ENCODE measurements at regions of chr15 and their contacts with region 1.

Region 1: GRCh38 chr15:90071208-90071807 is 31.0 kb downstream of the IDH2 start:
- DNase-seq: peak; percentile 87
- ATAC-seq: peak; percentile 98
- H3K4me3 ChIP-seq: no peak overlapping the region
- H3K4me3 Mint-ChIP-seq: no peak overlapping the region
- H3K27ac ChIP-seq: no peak overlapping the region
- H3K27ac Mint-ChIP-seq: peak overlapping the region; percentile 28
- H3K4me1 ChIP-seq: peaks cover 0 to 7% of the 10 kb centered on the region in 2 donors
- H3K4me1 Mint-ChIP-seq: peaks cover 4% of the 10 kb centered on the region
- H3K27me3 ChIP-seq: no peaks in the 10 kb centered on the region
- H3K27me3 Mint-ChIP-seq: no peaks in the 10 kb centered on the region
- CTCF ChIP-seq: peak; percentile 83

Region 2: DNA sequence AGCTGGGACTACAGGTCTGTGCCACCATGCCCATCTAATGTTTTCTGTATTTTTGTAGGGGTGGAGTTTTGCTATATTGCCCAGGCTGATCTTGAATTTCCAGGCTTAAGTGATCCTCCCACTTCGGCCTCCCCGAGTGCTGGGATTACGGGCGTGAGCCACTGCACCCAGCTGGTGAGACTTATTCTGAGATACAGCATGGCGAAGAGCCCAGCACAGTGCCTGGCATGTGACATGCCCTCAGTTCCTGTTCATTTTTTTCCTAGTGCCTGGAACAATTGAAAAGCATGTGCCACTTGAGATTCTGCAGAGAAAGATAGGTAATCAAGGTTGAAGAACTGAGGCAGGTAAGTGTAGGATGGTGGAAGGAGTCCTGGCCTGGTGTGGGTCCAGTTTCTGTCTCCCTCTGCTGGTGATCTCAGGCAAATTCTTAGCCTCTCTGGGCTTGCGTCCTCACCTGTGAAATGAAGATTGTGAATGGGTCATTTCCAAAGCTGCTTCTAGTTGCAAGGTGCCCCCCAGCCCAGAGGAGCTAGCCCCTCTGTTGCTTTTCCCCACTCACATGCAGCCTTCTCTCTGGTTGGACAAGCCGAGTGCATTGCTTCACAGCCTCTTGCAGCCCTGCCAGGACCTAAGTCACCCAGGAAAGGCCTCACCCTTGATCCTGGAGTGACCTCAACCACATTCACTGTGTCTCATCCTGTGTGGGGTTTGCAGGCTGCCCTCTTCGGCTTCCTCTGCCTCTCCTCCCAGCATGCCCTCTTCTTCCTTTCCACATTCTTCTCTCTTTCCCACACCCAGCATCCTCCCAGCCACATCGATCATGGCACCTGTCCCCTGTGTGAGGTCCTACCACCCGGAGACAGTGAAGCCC is 570.7 kb before region 1 on chr15:
- CTCF ChIA-PET with region 1: no interaction called
- POLR2A ChIA-PET with region 1: no interaction called
- intact Hi-C with region 1: no loop called
- DNase-seq: no peak
- ATAC-seq: no peak
- H3K4me3 ChIP-seq: no peak overlapping the region
- H3K4me3 Mint-ChIP-seq: no peak overlapping the region
- H3K27ac ChIP-seq: no peak overlapping the region
- H3K27ac Mint-ChIP-seq: no peak overlapping the region
- H3K4me1 ChIP-seq: peaks cover 7 to 13% of the 10 kb centered on the region in 2 donors
- H3K4me1 Mint-ChIP-seq: peaks cover 6% of the 10 kb centered on the region
- H3K27me3 ChIP-seq: peaks cover 0 to 27% (median 17%) of the 10 kb centered on the region in 4 experiments
- H3K27me3 Mint-ChIP-seq: peaks cover 66% of the 10 kb centered on the region
- CTCF ChIP-seq: no peak

Region 3: DNA sequence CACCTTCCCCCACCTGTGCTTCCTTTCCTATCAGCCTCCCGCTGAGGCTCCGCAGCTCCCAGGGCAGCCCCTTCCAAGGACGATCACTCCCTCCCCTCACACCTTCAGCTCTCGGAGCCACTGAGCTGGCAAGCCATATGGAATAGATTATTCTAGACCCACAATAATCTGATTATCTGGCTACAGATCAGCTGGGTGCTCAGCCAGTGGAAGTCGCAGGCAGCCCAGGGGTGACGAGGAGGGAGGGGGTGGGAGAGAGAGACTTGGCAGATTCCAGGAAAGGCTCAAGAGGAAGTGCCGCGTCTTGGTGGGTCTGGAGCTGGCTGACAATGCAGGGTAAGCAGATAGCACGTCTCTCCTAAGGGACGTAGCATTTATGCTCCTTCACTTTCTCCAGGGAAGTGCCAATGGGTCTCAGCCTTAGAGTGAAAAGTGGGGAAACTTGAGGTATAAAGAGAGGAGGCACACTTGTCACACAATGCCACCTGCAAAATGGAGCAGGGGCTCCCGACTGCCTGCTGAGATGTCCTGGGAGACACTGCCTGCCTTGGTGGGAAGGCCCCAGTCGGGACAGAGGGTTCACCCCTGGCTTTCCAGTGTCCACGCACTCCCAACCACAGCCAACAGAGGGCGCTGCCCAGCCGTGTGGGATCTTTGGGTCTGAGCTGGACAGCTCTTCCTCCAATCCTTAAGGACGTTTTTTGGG is 310.9 kb before region 1 on chr15:
- CTCF ChIA-PET with region 1: interaction called, 17 read pairs
- POLR2A ChIA-PET with region 1: no interaction called
- intact Hi-C with region 1: no loop called
- DNase-seq: peak; percentile 75
- ATAC-seq: peak; percentile 81
- H3K4me3 ChIP-seq: no peak overlapping the region
- H3K4me3 Mint-ChIP-seq: no peak overlapping the region
- H3K27ac ChIP-seq: no peak overlapping the region
- H3K27ac Mint-ChIP-seq: no peak overlapping the region
- H3K4me1 ChIP-seq: peaks cover 0 to 8% of the 10 kb centered on the region in 2 donors
- H3K4me1 Mint-ChIP-seq: no peaks in the 10 kb centered on the region
- H3K27me3 ChIP-seq: no peaks in the 10 kb centered on the region
- H3K27me3 Mint-ChIP-seq: peaks cover 7% of the 10 kb centered on the region
- CTCF ChIP-seq: peak; percentile 86

Region 4: DNA sequence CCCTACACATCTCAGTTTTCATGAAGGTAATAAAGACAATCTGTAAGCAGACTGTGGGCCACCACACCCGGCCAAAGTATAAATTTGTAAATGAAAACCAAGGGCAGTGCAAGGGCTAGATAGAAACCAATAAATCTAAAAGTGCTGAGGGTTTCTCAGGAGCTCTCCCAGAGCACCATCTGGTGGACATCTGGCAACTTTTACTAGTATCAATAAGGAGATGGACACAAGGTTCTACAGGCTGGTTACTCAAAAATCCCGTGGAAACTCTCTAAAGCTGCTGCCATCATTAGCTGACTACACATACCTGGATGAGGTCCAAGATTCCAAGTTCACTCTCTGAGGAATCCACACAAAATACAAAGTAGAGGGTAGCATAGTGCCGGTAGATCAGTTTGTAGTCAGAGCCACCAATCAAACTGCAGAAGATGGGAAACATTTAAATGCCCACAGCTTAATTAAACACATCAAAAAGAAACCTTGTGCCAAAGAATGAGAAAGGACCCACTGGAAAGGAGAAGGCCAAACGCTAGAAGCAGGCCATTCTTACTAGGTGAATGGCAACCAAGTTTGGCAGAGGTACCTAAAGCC is 183.0 kb before region 1 on chr15:
- CTCF ChIA-PET with region 1: interaction called, 28 read pairs
- POLR2A ChIA-PET with region 1: interaction called, 6 read pairs
- intact Hi-C with region 1: no loop called
- DNase-seq: no peak
- ATAC-seq: no peak
- H3K4me3 ChIP-seq: no peak overlapping the region
- H3K4me3 Mint-ChIP-seq: no peak overlapping the region
- H3K27ac ChIP-seq: no peak overlapping the region
- H3K27ac Mint-ChIP-seq: no peak overlapping the region
- H3K4me1 ChIP-seq: peaks cover 5 to 6% of the 10 kb centered on the region in 2 donors
- H3K4me1 Mint-ChIP-seq: peaks cover 20% of the 10 kb centered on the region
- H3K27me3 ChIP-seq: no peaks in the 10 kb centered on the region
- H3K27me3 Mint-ChIP-seq: no peaks in the 10 kb centered on the region
- CTCF ChIP-seq: no peak

Region 5: GRCh38 chr15:89912674-89913396 is 158.5 kb before region 1 on chr15 and contains the start of gene ARPIN:
- CTCF ChIA-PET with region 1: interaction called, 15 read pairs
- POLR2A ChIA-PET with region 1: interaction called, 3 read pairs
- intact Hi-C with region 1: no loop called
- DNase-seq: peak; percentile 32
- ATAC-seq: no peak
- H3K4me3 ChIP-seq: peak within 1 kb of the TSS in 4 of 5 experiments; percentile 13 to 63 (median 49)
- H3K4me3 Mint-ChIP-seq: peak within 1 kb of the TSS; percentile 71
- H3K27ac ChIP-seq: no peak within 1 kb of the TSS
- H3K27ac Mint-ChIP-seq: no peak within 1 kb of the TSS
- H3K4me1 ChIP-seq: peaks cover 12 to 13% of the 10 kb centered on the region in 2 donors
- H3K4me1 Mint-ChIP-seq: peaks cover 16% of the 10 kb centered on the region
- H3K27me3 ChIP-seq: peaks cover 0 to 19% (median 17%) of the 10 kb centered on the region in 4 experiments
- H3K27me3 Mint-ChIP-seq: peaks cover 46% of the 10 kb centered on the region
- CTCF ChIP-seq: no peak
- total RNA-seq, gene ARPIN: 0.10 TPM in 1 of 2 replicates, not detected in the other

Region 6: DNA sequence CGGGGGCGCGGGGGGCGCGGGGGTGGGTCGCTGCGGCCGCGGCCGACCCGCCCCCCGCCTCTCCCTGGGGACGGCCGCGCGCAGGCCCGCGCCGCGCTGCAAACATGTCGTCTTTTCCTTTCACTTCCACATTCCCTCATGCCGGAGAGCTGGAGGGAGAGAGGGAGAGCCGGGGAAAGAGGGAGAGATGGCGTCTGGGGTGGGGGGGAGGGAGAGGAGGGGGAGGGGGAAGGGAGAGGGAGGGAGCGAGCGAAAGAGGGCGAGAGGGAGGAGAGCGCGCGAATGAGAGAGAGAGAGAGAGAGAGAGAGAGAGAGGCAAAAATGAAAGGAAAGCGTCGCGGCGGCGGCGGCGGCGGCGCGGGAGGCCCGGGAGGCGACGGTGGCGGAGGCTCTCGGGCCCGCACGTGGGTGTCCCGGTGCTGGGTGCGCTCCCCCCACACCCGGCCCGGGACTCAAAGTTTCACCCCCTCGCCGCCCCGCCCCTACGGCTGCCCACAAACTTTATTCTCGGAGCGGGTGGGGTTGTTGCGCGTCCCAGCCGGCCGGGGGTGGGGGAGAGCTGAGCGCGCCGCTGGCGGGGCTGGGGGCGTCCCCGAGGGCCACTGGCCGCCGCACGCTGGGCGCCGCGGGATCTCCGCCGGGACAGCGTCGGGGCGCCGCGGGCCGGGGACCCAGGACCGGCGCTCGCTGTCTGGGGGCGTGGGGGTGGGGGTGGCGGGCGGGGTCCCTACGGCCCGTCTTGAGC is 69.5 kb before region 1 on chr15:
- CTCF ChIA-PET with region 1: interaction called, 34 read pairs
- POLR2A ChIA-PET with region 1: no interaction called
- intact Hi-C with region 1: loop called (anchors 1 kb)
- DNase-seq: peak; percentile 77
- ATAC-seq: peak; percentile 59
- H3K4me3 ChIP-seq: peak overlapping the region in 4 of 5 experiments; percentile 54 to 75 (median 64)
- H3K4me3 Mint-ChIP-seq: peak overlapping the region; percentile 94
- H3K27ac ChIP-seq: peak overlapping the region; percentile 43 to 68
- H3K27ac Mint-ChIP-seq: peak overlapping the region; percentile 96
- H3K4me1 ChIP-seq: peaks cover 11 to 35% of the 10 kb centered on the region in 2 donors
- H3K4me1 Mint-ChIP-seq: peaks cover 46% of the 10 kb centered on the region
- H3K27me3 ChIP-seq: no peaks in the 10 kb centered on the region
- H3K27me3 Mint-ChIP-seq: no peaks in the 10 kb centered on the region
- CTCF ChIP-seq: no peak

Region 7: GRCh38 chr15:90046911-90047392 is 24.4 kb before region 1 on chr15:
- CTCF ChIA-PET with region 1: interaction called, 19 read pairs
- POLR2A ChIA-PET with region 1: interaction called, 3 read pairs
- intact Hi-C with region 1: loop called (anchors 1 kb)
- DNase-seq: peak; percentile 79
- ATAC-seq: peak; percentile 89
- H3K4me3 ChIP-seq: peak overlapping the region in 3 of 5 experiments; percentile 3 to 42 (median 15)
- H3K4me3 Mint-ChIP-seq: peak overlapping the region; percentile 66
- H3K27ac ChIP-seq: peak overlapping the region; percentile 84 to 87
- H3K27ac Mint-ChIP-seq: peak overlapping the region; percentile 94
- H3K4me1 ChIP-seq: peaks cover 40 to 55% of the 10 kb centered on the region in 2 donors
- H3K4me1 Mint-ChIP-seq: peaks cover 62% of the 10 kb centered on the region
- H3K27me3 ChIP-seq: no peaks in the 10 kb centered on the region
- H3K27me3 Mint-ChIP-seq: no peaks in the 10 kb centered on the region
- CTCF ChIP-seq: no peak

Region 8: GRCh38 chr15:90086868-90087268 is 15.6 kb after region 1 on chr15:
- CTCF ChIA-PET with region 1: interaction called, 39 read pairs
- POLR2A ChIA-PET with region 1: no interaction called
- intact Hi-C with region 1: no loop called
- DNase-seq: peak; percentile 63
- ATAC-seq: peak; percentile 73
- H3K4me3 ChIP-seq: no peak overlapping the region
- H3K4me3 Mint-ChIP-seq: no peak overlapping the region
- H3K27ac ChIP-seq: no peak overlapping the region
- H3K27ac Mint-ChIP-seq: peak overlapping the region; percentile 46
- H3K4me1 ChIP-seq: no peaks in the 10 kb centered on the region
- H3K4me1 Mint-ChIP-seq: peaks cover 14% of the 10 kb centered on the region
- H3K27me3 ChIP-seq: no peaks in the 10 kb centered on the region
- H3K27me3 Mint-ChIP-seq: no peaks in the 10 kb centered on the region
- CTCF ChIP-seq: peak; percentile 71